Heart right ventricle (tissue), 16 donors: ENCODE measurements at regions of chr11 and their contacts with region 1.

Region 1: GRCh38 chr11:102109896-102110760 is at the start of gene YAP1:
- DNase-seq: peak; percentile 91
- ATAC-seq: peak; percentile 85 to 93 (median 90)
- H3K4me3 ChIP-seq: peak within 1 kb of the TSS; percentile 74 to 98 (median 89)
- H3K27ac ChIP-seq: peak within 1 kb of the TSS; percentile 94 to 99 (median 98)
- H3K4me1 ChIP-seq: peaks cover 0 to 39% (median 28%) of the 10 kb centered on the region in 9 donors
- H3K27me3 ChIP-seq: peaks cover 0 to 74% (median 0%) of the 10 kb centered on the region in 7 donors
- CTCF ChIP-seq: peak in 2 of 9 donors; percentile 3 to 12
- total RNA-seq, gene YAP1: 56.5 to 91.3 (median 68.7) TPM

Region 2: DNA sequence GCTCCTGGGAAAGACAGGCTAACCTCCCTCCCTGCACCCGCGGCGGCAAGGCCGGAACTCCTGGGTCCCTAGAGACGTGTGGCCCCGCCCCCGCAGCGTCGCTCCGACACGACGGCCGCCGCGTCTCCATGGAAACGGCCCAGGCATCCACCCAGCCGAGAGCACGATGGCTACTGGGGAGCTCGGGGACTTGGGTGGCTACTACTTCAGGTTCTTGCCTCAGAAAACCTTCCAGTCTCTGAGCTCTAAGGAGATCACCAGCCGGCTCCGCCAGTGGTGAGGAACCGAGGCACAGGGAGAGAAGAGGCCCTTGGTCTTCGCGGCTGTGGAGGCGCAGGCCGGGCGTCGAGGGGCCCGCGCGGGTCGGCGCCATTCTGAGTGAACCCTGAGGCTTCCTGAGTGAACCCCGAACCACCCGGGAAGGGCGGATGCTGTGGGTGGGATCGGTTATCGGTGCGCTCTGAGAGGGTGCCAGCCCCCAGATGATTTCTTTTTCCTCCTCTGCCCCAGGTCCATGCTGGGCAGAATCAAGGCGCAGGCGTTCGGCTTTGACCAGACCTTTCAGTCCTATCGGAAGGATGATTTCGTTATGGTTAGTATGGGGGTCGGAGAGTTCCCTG is 62.7 kb before region 1 on chr11 and contains the start of gene CFAP300:
- intact Hi-C with region 1: loop called in 1 of 10 experiments (anchors 2 kb)
- DNase-seq: peak; percentile 91 to 94
- ATAC-seq: peak; percentile 89 to 98 (median 94)
- H3K4me3 ChIP-seq: peak within 1 kb of the TSS; percentile 40 to 71 (median 54)
- H3K27ac ChIP-seq: peak within 1 kb of the TSS in 9 of 10 donors; percentile 37 to 75 (median 60)
- H3K4me1 ChIP-seq: peaks cover 0 to 14% (median 6%) of the 10 kb centered on the region in 9 donors
- H3K27me3 ChIP-seq: peaks cover 0 to 38% (median 21%) of the 10 kb centered on the region in 7 donors
- CTCF ChIP-seq: no peak
- total RNA-seq, gene CFAP300: 0.26 to 1.8 (median 0.69) TPM in 9 of 10 donors, not detected in the other

Region 3: DNA sequence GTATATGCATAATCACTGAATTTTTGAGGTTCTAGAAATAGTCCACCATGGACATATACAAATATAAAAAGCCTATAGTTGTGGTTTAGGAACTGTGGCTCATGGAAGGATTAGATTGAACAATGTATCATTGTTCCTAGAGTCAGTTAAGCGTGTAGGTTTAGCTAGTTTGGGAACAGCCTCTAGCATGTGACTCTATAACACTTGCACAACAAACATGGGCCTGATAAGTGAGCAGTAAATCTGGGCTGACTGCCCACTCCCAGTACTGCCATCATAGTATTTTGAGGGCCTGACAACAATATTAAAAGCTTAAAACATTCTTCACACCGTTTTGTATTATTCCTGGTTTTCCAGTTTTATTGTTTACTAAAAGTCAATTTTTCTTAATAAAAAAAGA is 47.1 kb after region 1 on chr11:
- intact Hi-C with region 1: loop called in 1 of 10 experiments (anchors 5 kb)
- DNase-seq: peak; percentile 21 to 67
- ATAC-seq: peak; percentile 59 to 98 (median 92)
- H3K4me3 ChIP-seq: no peak overlapping the region
- H3K27ac ChIP-seq: peak overlapping the region in 5 of 10 donors; percentile 14 to 53 (median 42)
- H3K4me1 ChIP-seq: peaks cover 5 to 82% (median 54%) of the 10 kb centered on the region in 9 donors
- H3K27me3 ChIP-seq: no peaks in the 10 kb centered on the region
- CTCF ChIP-seq: no peak

Region 4: GRCh38 chr11:102177974-102178631 is 68.0 kb after region 1 on chr11:
- intact Hi-C with region 1: no loop called
- DNase-seq: no peak
- ATAC-seq: peak in 4 of 8 donors; percentile 17 to 94 (median 46)
- H3K4me3 ChIP-seq: no peak overlapping the region
- H3K27ac ChIP-seq: peak overlapping the region in 2 of 10 donors; percentile 9 to 51
- H3K4me1 ChIP-seq: peaks cover 0 to 15% (median 0%) of the 10 kb centered on the region in 9 donors
- H3K27me3 ChIP-seq: no peaks in the 10 kb centered on the region
- CTCF ChIP-seq: no peak

Region 5: DNA sequence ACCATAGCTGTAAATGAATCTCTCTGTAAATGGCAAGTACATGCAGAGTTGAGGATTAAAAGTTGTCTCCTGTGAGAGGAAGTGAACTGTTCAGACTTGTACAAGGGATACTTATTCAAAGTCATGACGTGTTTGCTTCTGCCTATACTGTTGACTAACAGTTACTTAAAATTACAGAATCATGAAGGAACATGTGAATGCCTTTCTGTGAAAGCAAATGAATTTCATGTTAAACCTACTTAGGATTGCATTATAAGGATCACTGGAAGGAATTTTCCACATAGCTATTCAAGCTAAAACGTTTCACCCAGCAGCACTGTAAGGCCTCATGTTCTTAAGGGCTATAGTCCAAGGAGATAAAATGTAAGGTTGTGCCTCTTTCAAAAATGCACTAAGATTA is 113.7 kb after region 1 on chr11:
- intact Hi-C with region 1: loop called in 6 of 10 experiments (anchors 5 to 10 kb)
- DNase-seq: no peak
- ATAC-seq: no peak
- H3K4me3 ChIP-seq: no peak overlapping the region
- H3K27ac ChIP-seq: no peak overlapping the region
- H3K4me1 ChIP-seq: peaks cover 0 to 18% (median 7%) of the 10 kb centered on the region in 9 donors
- H3K27me3 ChIP-seq: no peaks in the 10 kb centered on the region
- CTCF ChIP-seq: no peak

Region 6: GRCh38 chr11:102268329-102269193 is 158.4 kb after region 1 on chr11:
- intact Hi-C with region 1: loop called in 4 of 10 experiments (anchors 5 to 10 kb)
- DNase-seq: peak; percentile 58 to 77
- ATAC-seq: peak; percentile 88 to 97 (median 96)
- H3K4me3 ChIP-seq: peak overlapping the region in 9 of 10 donors; percentile 34 to 52 (median 48)
- H3K27ac ChIP-seq: peak overlapping the region in 3 of 10 donors; percentile 30 to 45 (median 39)
- H3K4me1 ChIP-seq: peaks cover 4 to 21% (median 9%) of the 10 kb centered on the region in 9 donors
- H3K27me3 ChIP-seq: peaks cover 0 to 53% (median 0%) of the 10 kb centered on the region in 7 donors
- CTCF ChIP-seq: peak in 7 of 9 donors; percentile 41 to 70 (median 52)

Region 7: DNA sequence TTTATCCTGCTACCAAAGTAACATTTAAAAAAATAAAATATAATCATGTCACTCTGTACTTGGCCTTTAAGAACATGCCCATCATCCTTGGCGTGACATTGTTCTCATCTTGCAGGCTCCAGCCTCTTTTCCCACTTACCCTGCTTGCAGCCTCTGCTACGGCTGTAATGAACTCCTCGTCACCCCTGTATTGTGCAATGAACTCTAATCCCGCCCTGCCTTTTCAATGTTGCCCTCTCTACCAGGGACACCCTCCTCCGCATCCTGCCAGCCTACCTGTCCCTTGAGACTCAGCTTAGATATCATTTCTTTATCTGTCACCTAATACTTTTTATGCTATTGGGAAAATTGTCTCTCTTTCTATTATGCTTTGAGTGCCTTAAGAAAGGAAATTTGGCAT is 527.6 kb after region 1 on chr11:
- intact Hi-C with region 1: no loop called
- DNase-seq: no peak
- ATAC-seq: no peak
- H3K4me3 ChIP-seq: no peak overlapping the region
- H3K27ac ChIP-seq: no peak overlapping the region
- H3K4me1 ChIP-seq: no peaks in the 10 kb centered on the region
- H3K27me3 ChIP-seq: no peaks in the 10 kb centered on the region
- CTCF ChIP-seq: no peak